Colonic mucosa (tissue), 4 donors: ENCODE measurements at regions of chr12 and their contacts with region 1.

Region 1: GRCh38 chr12:95117178-95117599 is 43.8 kb upstream of the NR2C1 start:
- DNase-seq: peak; percentile 74
- H3K4me3 ChIP-seq: no peak overlapping the region
- H3K27ac ChIP-seq: no peak overlapping the region
- H3K4me1 ChIP-seq: peaks cover 11% of the 10 kb centered on the region
- H3K27me3 ChIP-seq: no peaks in the 10 kb centered on the region
- CTCF ChIP-seq: peak; percentile 52

Region 2: GRCh38 chr12:93990832-93991803 is 1126.1 kb before region 1 on chr12:
- intact Hi-C with region 1: no loop called
- DNase-seq: peak; percentile 23
- H3K4me3 ChIP-seq: no peak overlapping the region
- H3K27ac ChIP-seq: no peak overlapping the region
- H3K4me1 ChIP-seq: no peaks in the 10 kb centered on the region
- H3K27me3 ChIP-seq: no peaks in the 10 kb centered on the region
- CTCF ChIP-seq: no peak

Region 3: DNA sequence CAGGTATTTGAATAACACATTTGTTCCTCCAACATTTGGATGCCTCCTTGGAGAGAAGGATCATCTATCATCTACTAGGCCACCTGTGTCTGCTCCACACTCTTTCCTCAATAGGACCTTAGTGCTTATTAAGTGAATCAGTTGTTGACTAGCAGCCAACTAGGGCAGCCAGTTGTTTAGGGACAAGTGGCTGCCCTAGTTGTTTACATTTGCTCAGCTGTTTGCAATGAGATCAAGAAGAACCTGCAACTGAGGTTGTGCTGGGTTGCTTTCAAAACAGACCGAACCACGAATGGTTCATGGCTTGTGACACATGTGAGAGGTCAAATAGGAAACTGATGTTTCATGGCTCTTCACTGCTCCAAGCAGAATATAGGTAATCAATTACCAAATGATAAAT is 520.6 kb before region 1 on chr12:
- intact Hi-C with region 1: no loop called
- DNase-seq: no peak
- H3K4me3 ChIP-seq: no peak overlapping the region
- H3K27ac ChIP-seq: no peak overlapping the region
- H3K4me1 ChIP-seq: no peaks in the 10 kb centered on the region
- H3K27me3 ChIP-seq: no peaks in the 10 kb centered on the region
- CTCF ChIP-seq: no peak

Region 4: GRCh38 chr12:95217377-95218149 is 100.4 kb after region 1 on chr12 and contains the starts of genes FGD6 and VEZT:
- intact Hi-C with region 1: loop called (anchors 2 kb)
- DNase-seq: peak; percentile 99
- H3K4me3 ChIP-seq: peak within 1 kb of the TSS; percentile 86
- H3K27ac ChIP-seq: peak within 1 kb of the TSS; percentile 98
- H3K4me1 ChIP-seq: peaks cover 11% of the 10 kb centered on the region
- H3K27me3 ChIP-seq: no peaks in the 10 kb centered on the region
- CTCF ChIP-seq: peak; percentile 37
- total RNA-seq, gene FGD6: 9.8 to 21.8 TPM
- total RNA-seq, gene VEZT: 36.4 to 62.2 TPM

Region 5: DNA sequence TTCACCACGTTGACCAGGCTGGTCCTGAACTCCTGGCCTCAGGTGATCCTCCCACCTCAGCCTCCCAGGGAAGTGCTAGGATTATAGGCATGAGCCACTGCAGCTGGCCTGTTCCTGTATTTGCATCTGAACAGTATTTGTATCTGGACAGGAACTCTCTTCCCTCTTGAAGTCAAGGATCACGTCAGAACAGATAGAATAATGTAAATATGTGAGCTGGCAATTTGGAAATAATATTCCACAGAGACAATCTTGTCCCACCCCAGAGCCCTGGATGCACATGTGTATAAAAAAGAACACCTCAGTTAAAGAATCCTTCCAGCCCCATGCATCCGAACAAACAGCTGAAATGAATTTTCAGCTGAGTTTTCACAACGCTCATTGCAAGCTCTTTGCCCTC is 218.8 kb after region 1 on chr12:
- intact Hi-C with region 1: loop called (anchors 2 kb)
- DNase-seq: no peak
- H3K4me3 ChIP-seq: no peak overlapping the region
- H3K27ac ChIP-seq: peak overlapping the region; percentile 27
- H3K4me1 ChIP-seq: no peaks in the 10 kb centered on the region
- H3K27me3 ChIP-seq: no peaks in the 10 kb centered on the region
- CTCF ChIP-seq: no peak

Region 6: DNA sequence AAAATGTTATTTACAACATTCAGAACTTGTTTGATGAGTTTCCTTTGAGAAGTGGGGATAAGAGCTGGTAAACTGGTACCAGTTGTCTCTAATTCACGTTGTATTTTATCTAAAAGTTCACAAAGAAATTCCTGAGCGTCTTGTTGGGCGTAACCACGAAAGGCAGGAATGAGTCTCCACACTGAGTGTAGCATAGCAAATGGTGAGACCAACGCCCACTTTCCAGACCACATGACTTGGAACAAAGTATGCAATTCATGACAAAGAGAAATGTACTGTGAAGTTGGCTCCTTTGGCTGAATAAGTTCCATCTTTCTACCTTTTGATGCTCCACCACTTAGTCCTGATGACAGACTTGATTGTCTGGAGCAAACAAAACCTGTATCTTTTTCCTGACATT is 415.7 kb after region 1 on chr12:
- intact Hi-C with region 1: loop called (anchors 5 kb)
- DNase-seq: no peak
- H3K4me3 ChIP-seq: no peak overlapping the region
- H3K27ac ChIP-seq: no peak overlapping the region
- H3K4me1 ChIP-seq: no peaks in the 10 kb centered on the region
- H3K27me3 ChIP-seq: no peaks in the 10 kb centered on the region
- CTCF ChIP-seq: no peak